Right ventricle myocardium inferior (tissue), 1 donor: ENCODE measurements at regions of chr18 and their contacts with region 1.

Region 1: DNA sequence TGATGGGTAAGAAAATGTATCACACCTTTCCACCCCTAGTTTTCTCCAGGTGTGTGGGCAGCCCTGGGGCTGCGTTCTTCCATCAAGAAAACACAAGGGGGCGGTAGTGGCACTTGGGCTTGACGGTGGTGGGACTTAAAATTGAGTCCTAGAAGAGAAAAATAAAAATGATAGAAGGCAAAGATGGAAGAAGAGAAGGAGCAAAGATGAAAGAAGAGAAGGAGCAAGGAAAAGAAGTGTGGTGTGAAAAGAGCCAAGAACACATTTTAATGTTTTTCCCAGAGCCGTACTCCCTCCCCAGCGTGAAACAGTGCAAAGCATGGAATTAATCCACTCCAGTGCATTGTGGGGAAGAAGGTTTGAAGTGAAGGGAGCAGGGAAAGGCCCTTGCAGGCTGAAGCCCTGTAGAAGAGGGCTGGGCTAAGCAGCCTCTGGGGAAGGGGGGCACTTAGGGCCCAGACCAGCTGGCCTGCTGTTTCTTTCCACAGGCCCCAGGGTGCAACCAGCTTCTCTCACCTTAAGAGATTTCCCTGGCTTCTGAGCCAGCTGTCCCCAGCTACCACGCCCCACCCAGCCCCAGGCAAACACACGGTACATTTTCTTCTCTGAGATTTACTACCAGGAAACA is 256.8 kb downstream of the RNF152 start:
- DNase-seq: no peak
- ATAC-seq: peak; percentile 74

Region 2: DNA sequence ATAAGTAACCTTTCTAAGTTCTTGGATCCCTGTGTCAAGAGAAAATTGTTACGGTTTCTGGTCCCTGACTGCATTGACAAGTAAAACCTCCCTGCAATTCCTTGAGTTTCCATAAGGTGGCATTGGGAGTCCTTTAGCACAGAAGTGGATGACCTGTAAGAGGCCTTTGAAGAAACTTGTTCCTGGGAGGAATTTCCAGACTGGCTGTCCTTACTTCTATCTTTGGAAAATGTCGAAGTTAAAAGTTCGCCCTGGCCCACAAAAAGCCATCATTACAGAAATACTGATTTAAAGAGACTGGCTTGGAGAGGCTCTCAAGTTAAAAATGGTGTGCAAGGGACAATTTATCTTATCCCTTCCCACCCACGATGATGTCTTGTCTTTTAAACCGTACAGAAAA is 84.4 kb before region 1 on chr18:
- intact Hi-C with region 1: loop called (anchors 5 kb)
- DNase-seq: no peak
- ATAC-seq: peak; percentile 81

Region 3: GRCh38 chr18:61581578-61582201 is 54.3 kb before region 1 on chr18:
- intact Hi-C with region 1: loop called (anchors 2 kb)
- DNase-seq: peak; percentile 85
- ATAC-seq: peak; percentile 86

Region 4: GRCh38 chr18:61743775-61744531 is 107.9 kb after region 1 on chr18:
- intact Hi-C with region 1: loop called (anchors 5 kb)
- DNase-seq: no peak
- ATAC-seq: peak; percentile 82

Region 5: GRCh38 chr18:61893971-61894750 is 258.1 kb after region 1 on chr18:
- intact Hi-C with region 1: loop called (anchors 2 kb)
- DNase-seq: peak; percentile 89
- ATAC-seq: peak; percentile 96

Region 6: GRCh38 chr18:62037989-62038778 is 402.2 kb after region 1 on chr18:
- intact Hi-C with region 1: loop called (anchors 5 kb)
- DNase-seq: no peak
- ATAC-seq: peak; percentile 77

Region 7: DNA sequence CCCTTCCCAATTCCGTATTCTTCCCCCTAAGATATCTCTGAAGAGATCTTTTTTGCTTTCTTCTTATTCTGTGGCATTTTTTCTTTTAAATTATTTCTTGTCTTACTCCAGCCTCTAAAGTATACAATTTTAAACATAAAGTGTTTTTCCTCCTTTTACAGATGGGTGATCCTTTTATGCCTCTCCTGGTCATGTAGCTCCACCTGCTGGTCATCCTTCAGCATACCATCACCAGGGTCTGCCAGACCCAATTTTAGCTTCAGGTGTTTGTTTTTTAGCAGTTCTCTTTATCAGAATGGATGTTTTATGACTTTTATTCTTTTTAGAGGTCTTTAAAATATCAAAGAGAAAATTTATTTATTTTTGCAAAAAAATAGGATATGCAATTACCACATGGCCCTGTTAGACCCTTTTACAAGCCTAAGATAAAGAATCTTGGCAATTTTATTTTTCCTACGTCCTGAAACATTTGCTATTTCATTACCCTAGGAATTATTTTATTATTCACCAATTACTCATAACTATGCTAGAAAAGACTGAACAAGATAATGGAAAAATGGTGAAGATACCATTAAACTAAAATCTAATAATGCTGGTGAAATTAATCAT is 495.4 kb after region 1 on chr18:
- intact Hi-C with region 1: loop called (anchors 5 kb)
- DNase-seq: no peak
- ATAC-seq: no peak